Left cardiac atrium (tissue), 4 donors: ENCODE measurements at regions of chr10 and their contacts with region 1.

Region 1: GRCh38 chr10:97914837-97915211 is 65.2 kb downstream of the GOLGA7B start:
- DNase-seq: peak; percentile 82
- ATAC-seq: peak; percentile 83 to 88

Region 2: DNA sequence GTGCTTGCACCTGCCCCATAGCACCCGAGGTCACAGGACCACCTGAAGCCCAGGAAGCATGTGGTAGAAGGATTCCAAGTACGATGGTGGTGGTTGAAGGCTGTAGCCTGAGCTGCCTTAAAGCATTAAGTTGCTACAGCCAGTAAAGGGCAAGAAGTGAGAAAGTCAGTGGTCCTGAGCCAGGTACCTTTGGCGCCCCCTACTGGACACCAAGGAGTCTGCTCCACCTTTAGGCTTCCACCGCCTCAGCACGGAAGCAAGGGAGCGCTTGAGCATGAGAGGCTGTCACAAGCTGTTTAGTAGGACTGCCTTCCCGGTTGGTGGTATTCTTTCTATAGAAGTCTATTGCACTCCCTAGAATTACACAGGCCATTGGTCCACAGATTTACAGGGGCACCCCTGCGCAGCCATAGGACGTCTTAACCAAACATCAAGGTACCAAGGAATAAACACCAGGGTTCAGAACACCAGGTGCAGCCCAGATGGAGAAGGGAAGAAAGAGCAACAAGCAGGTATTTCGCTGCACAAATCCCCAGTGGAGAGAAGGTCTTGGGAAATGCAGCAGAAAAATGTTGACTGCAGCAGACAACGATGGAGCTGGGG is 113.4 kb after region 1 on chr10:
- intact Hi-C with region 1: loop called (anchors 5 kb)
- DNase-seq: peak; percentile 68
- ATAC-seq: peak in 1 of 2 donors; percentile 48

Region 3: DNA sequence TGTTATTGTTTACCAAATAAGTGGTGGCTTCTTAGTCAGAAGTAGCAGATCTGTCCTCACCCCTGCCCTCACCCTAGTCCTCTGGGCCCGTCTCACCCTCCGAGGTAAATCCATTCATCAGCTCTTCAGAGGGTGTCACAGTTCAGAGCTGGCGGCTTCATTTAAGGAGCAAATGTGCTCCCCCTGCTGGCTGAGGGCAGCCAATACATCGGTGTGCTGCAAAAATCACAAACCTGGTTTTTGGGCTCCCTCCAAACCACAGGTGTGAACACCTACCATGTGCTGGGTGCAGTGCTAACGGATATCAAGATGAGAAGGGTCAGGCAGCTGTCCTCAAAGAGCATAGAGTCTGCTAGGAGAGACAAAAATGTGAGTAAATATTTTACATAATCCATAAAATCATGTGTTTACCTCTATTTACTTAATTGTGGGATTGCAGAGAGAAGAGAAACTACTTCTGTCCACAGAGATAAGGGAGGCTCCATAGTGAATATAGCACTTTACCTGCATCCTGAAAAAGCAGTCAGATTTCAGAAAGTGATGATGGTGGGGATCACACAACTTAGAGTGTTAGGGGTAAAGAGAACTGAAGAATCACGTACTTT is 131.1 kb after region 1 on chr10:
- intact Hi-C with region 1: loop called in 1 of 2 experiments (anchors 2 kb)
- DNase-seq: peak; percentile 55
- ATAC-seq: peak; percentile 25 to 65

Region 4: DNA sequence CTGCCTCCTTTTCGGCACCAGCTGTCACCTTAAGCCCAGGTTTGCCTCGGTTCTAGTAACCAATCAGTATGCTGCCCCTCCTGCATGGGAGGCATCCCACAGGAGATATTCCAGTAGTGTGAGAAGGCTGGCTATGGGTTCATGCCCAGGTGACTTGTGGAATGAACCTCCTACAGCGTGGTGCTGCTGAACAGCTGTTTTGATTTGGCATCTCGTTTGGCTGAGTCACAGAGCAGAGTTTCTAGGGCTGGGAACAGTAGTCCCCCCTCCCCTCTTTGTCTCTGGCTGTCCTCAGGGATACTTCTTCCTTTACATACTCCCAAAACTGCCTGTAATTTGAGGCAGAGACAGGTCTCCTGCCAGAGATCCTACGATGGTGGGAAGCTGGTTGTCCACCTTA is 235.7 kb after region 1 on chr10:
- intact Hi-C with region 1: no loop called
- DNase-seq: no peak
- ATAC-seq: no peak